ENCODE measurements at regions of chr7 and their contacts with region 1.

Region 1: GRCh38 chr7:145784809-145785780 is 331.5 kb upstream of the CNTNAP2 start:
- DNase-seq: no peak
- ATAC-seq: no peak
- H3K4me3 ChIP-seq: no peak overlapping the region
- H3K27ac ChIP-seq: no peak overlapping the region
- H3K4me1 ChIP-seq: no peaks in the 10 kb centered on the region
- H3K27me3 ChIP-seq: no peaks in the 10 kb centered on the region
- CTCF ChIP-seq: no peak

Region 2: DNA sequence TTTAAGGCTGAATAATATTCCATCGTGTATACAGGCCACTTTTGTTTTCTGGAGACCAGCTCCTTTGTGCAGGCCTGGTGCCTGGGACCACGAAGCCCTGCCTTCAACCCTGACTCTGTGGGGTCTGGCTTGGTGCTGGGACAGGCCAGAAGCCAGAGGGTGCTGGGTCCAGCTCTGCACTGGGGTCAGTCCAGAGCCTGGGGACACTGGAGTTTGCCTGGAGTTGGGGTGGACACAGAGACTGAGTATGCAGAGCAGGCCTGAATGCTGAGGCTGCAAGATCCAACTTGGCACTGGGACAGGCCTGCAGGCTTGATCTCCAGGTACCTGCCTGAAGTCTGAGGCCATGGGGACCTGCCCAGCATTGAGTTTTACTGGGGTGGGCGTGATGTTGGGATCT is 227.3 kb before region 1 on chr7:
- intact Hi-C with region 1: no loop called
- DNase-seq: no peak
- ATAC-seq: no peak
- H3K4me3 ChIP-seq: no peak overlapping the region
- H3K27ac ChIP-seq: no peak overlapping the region
- H3K4me1 ChIP-seq: no peaks in the 10 kb centered on the region
- H3K27me3 ChIP-seq: no peaks in the 10 kb centered on the region
- CTCF ChIP-seq: no peak

Region 3: GRCh38 chr7:145839814-145840213 is 54.7 kb after region 1 on chr7:
- intact Hi-C with region 1: loop called in 1 of 10 experiments (anchors 2 kb)
- DNase-seq: no peak
- ATAC-seq: no peak
- H3K4me3 ChIP-seq: no peak overlapping the region
- H3K27ac ChIP-seq: no peak overlapping the region
- H3K4me1 ChIP-seq: no peaks in the 10 kb centered on the region
- H3K27me3 ChIP-seq: no peaks in the 10 kb centered on the region
- CTCF ChIP-seq: no peak

Region 4: DNA sequence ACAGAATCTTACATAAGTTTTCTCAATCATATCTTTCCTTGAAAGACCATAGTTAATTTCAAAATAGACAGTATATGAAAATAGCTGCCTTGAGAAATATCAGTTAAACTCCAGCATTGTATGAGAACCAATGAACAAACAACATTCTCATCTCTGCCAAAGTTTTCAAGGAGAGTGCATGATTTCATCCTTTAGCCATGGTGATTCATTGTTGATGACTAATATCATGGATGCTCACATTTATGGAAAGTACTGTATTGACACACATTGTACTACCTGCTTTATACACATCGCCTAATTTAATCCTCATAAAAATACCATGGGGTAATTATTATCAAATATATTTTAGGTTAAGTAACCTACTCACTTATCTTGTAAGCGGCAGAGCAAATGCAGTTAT is 581.8 kb after region 1 on chr7:
- intact Hi-C with region 1: no loop called
- DNase-seq: no peak
- ATAC-seq: no peak
- H3K4me3 ChIP-seq: no peak overlapping the region
- H3K27ac ChIP-seq: no peak overlapping the region
- H3K4me1 ChIP-seq: no peaks in the 10 kb centered on the region
- H3K27me3 ChIP-seq: no peaks in the 10 kb centered on the region
- CTCF ChIP-seq: no peak

Measured in heart right ventricle (tissue), 16 donors.